ENCODE measurements at regions of chr5 and their contacts with region 1.

Region 1: GRCh38 chr5:139863855-139864558 is 68.4 kb downstream of the PSD2 start:
- H3K4me3 ChIP-seq: no peak overlapping the region
- H3K27ac ChIP-seq: no peak overlapping the region
- H3K4me1 ChIP-seq: no peaks in the 10 kb centered on the region
- CTCF ChIP-seq: peak; percentile 49

Region 2: GRCh38 chr5:139787568-139788293 is 76.3 kb before region 1 on chr5:
- CTCF ChIA-PET with region 1: interaction called, 32 read pairs
- POLR2A ChIA-PET with region 1: no interaction called
- H3K4me3 ChIP-seq: peak overlapping the region; percentile 48
- H3K27ac ChIP-seq: peak overlapping the region; percentile 56; the same call in 1 of the 2 replicates
- H3K4me1 ChIP-seq: no peaks in the 10 kb centered on the region
- CTCF ChIP-seq: peak; percentile 79; the same call in 1 of the 2 replicates

Region 3: DNA sequence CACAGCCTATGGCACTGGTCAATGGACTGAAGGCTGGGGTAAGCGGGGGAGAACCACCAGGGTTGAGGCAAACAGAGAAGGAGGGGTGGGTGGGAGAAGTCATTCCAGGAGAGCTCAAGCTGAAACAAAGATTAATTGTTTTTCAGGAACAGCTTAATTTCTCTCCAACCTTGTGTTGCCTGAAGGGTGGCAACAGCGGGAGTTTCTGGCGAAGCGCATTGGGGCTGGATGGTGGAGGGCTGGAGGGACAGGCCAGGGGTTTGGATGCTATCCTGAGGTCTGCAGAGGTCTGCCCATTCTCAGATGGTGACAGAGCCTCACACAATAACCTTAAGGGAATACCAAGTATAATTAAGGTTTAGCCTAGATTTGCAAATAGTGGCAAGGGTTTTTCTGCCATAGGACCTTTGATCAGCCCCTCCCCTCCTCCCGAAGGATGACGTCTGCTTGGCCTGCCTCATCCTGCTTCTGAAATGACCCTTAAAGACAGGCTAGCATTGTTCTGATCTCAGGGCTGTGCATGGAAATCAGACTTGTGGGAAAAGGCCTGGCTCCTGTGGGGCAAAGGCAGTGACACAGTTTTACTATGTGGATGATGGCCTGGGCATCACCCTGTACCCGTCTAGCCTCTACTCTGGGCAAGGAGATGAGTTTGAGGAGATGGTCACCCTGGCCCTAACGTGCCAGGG is 35.7 kb before region 1 on chr5:
- CTCF ChIA-PET with region 1: no interaction called
- POLR2A ChIA-PET with region 1: no interaction called
- H3K4me3 ChIP-seq: no peak overlapping the region
- H3K27ac ChIP-seq: no peak overlapping the region
- H3K4me1 ChIP-seq: no peaks in the 10 kb centered on the region
- CTCF ChIP-seq: no peak

Region 4: GRCh38 chr5:139844472-139845145 is 19.4 kb before region 1 on chr5:
- CTCF ChIA-PET with region 1: interaction called, 11 read pairs
- POLR2A ChIA-PET with region 1: no interaction called
- H3K4me3 ChIP-seq: no peak overlapping the region
- H3K27ac ChIP-seq: no peak overlapping the region
- H3K4me1 ChIP-seq: no peaks in the 10 kb centered on the region
- CTCF ChIP-seq: peak; percentile 88

Region 5: DNA sequence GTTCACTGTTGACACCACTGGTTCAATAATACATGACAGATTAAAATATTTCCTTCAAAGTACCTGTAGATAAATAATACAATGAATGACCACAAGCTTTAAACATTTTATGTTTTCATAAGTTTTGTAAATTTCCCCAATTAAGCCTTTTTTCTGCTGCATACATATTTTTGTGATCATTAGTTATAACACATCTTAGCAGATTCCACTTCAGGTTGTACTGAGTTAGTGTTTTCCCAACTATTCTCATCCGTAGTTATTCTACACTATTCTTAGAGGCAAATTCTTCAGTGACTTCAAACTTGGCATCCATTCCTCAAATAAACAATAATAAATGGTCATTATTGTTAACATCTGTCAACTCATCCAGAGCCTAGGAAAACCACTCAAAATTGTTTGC is 78.2 kb after region 1 on chr5:
- CTCF ChIA-PET with region 1: interaction called, 13 read pairs
- POLR2A ChIA-PET with region 1: no interaction called
- H3K4me3 ChIP-seq: no peak overlapping the region
- H3K27ac ChIP-seq: no peak overlapping the region
- H3K4me1 ChIP-seq: no peaks in the 10 kb centered on the region
- CTCF ChIP-seq: no peak